Ascending aorta (tissue), 2 donors: ENCODE measurements at regions of chr17 and their contacts with region 1.

Region 1: DNA sequence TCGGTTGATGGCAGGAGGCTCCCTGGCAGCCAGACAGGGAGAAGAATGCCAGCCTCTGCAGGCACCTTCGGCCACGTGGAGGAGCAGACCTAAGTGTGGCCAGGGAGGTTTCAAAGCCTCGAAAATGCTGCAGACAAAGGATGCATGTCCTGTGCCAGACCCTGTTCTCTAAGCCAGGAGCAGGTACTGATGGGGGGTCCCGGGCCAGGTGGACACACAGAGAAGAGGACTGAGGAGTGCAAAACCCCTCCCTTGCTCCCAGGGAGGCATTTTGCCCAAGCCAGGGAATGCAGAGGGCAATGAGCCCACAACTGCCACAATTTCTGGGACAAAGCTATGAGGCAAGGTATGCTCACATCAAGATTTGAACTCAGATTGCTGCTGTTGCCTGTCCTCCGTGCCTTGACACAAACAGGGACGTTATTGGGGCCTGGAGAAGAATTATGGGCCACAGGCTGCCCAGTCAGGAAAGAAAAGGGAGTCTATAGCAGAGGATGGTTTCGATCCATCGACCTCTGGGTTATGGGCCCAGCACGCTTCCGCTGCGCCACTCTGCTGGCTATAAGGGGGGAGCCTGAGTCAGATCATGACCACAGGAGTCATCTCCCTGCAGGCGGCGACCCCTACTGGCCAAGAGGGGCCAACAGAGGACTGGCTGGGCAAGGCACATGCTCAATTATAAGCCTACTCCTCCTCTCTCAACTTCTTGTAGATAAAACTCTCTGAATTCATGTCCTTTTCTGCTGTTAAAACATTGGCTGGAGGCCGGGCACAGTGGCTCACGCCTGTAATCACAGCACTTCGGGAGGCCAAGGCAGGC is 25.1 kb upstream of the FOXK2 start:
- DNase-seq: peak; percentile 84 to 96
- H3K4me3 ChIP-seq: no peak overlapping the region
- H3K27ac ChIP-seq: peak overlapping the region; percentile 90 to 91
- H3K4me1 ChIP-seq: peaks cover 6 to 28% of the 10 kb centered on the region in 2 donors
- H3K27me3 ChIP-seq: no peaks in the 10 kb centered on the region
- CTCF ChIP-seq: peak; percentile 81 to 95 (median 87)

Region 2: DNA sequence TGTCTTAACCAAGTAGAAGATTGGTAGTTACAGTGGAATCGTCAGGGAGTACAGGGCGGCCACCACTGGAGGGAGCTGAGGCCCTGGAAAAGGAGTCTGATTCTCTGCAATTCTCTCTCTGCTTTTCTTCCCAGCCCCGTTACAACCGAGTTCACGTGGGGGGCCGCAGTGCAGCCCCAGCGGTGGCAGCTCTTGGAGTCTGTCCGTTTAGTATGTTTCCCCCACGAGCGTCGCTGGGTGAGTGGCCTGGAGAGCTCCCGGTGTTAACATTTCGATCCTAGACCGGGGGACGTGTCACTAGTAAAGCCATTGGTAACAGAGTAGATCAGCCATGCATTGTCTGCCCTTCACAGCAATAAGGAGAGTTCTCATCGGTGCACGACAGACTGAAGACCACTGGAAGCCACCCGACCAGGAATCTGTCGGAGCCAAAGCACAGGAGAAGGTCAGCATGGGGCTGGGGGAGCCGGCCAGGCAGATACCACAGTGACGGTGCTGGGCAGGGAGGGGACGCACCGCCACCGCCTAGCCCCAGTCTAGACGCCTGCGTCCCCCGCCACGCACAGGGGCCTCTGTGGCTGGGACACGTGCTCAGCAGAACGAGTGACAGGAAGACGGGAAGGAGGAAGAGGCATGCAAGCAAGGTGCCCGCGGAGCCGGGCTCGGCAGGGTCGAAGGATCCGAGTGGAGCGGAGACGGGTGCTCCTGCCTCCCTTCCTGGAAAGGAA is 249.9 kb before region 1 on chr17:
- intact Hi-C with region 1: no loop called
- DNase-seq: no peak
- H3K4me3 ChIP-seq: no peak overlapping the region
- H3K27ac ChIP-seq: no peak overlapping the region
- H3K4me1 ChIP-seq: peaks cover 33 to 47% of the 10 kb centered on the region in 2 donors
- H3K27me3 ChIP-seq: no peaks in the 10 kb centered on the region
- CTCF ChIP-seq: peak in 2 of 3 experiments; percentile 31 to 44

Region 3: DNA sequence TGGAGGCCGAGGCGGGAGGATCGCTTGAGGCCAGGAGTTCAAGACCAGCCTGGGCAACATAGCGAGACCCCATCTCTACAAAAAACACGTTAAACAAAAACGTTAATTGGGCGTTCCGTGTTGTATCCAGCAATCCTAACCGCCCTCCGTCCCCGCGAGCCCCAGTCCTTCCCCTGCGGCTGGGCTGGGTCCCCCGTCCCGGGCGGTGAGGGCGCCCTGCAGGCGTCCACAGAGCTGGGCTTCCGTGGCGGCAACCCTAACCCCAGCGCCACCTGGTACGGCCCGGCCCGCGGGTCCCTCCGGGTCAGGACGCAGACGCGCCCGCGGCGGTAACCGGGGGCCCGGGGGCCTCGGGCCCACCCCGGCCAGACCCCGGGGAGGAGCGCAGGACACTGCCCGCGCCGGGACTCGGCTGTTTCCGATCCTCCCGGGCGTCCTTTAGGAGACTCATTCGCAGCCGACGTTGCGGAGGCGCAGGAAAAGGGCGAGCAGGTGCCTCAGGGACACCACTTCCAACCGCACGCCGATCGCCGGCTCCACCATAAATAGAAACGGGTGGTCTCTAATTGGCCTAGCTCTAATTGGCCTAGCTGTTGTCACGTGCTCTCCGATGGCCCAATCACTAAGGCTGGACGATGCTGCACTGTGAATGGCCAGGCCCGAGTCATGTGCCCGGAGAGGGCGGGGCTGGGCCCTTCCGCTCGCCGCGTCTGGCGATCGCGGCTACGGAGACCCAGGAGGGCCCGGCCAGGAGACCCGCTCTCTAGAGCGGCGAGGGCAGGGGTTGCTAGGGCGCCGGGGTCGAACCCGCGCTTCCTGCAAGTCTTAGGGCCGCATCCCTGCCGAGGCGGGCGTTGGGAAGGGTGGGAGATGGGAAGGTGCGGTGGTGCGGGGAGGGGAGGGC is 201.9 kb before region 1 on chr17:
- intact Hi-C with region 1: loop called (anchors 5 kb)
- DNase-seq: peak; percentile 95 to 98
- H3K4me3 ChIP-seq: peak overlapping the region; percentile 91 to 97
- H3K27ac ChIP-seq: peak overlapping the region; percentile 98 to 99
- H3K4me1 ChIP-seq: peaks cover 4 to 22% of the 10 kb centered on the region in 2 donors
- H3K27me3 ChIP-seq: no peaks in the 10 kb centered on the region
- CTCF ChIP-seq: no peak

Region 4: DNA sequence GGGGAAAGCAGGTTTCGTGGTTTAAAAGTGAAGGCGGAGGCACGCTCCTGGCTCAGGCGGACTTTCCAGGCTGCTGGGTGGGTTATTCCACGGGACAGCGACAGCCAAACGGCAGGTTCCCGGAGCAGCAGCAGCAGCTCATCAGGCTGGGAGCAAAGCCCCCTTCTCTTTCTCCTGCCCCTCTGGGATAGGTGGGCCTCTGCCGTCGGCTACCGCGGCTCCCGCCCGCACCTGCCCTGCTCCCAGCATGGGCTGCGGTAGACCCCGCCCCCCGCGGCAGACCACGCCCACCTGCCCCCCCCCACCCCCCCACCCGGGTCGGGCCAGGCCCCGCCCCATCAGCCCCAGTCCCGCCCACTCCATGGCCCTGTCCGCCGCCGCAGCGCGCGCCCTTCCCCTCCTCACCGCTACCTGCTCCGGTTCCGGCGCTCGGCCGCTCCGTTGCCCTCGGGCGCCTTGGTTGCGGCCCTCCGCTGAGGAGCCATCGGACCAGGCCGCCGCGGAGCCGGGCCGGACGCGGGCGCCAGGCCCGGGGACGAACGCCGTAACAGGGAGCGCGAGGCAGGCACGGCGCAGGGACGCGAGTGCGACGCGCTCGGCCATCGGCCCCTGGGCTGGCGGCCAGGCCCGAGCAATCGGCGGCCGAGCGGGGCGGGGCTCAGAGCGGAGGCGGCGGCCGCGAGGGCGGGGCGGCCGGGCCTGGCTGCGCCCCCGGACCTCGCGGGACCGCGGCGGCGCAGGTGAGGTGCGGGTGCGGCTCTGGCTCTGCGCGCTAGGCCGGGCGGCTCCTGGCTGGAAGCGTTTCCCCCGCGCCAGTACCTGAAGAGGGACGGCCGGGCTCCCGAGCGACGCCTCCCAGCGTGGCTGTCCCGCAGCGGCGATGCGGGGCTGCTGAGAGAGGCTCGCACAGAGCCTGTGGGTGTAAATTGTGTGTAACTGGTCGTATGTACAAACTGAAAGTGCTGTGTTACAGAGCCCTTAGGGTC is 76.2 kb before region 1 on chr17 and contains the starts of genes HEXD and OGFOD3:
- intact Hi-C with region 1: loop called (anchors 2 kb)
- DNase-seq: peak in 1 of 2 donors; percentile 89
- H3K4me3 ChIP-seq: peak within 1 kb of the TSS; percentile 79 to 96
- H3K27ac ChIP-seq: peak within 1 kb of the TSS; percentile 75 to 92
- H3K4me1 ChIP-seq: peaks cover 4 to 10% of the 10 kb centered on the region in 2 donors
- H3K27me3 ChIP-seq: no peaks in the 10 kb centered on the region
- CTCF ChIP-seq: peak in 1 of 3 experiments; percentile 32
- total RNA-seq, gene HEXD: 40.4 TPM
- total RNA-seq, gene OGFOD3: 36.6 TPM

Region 5: DNA sequence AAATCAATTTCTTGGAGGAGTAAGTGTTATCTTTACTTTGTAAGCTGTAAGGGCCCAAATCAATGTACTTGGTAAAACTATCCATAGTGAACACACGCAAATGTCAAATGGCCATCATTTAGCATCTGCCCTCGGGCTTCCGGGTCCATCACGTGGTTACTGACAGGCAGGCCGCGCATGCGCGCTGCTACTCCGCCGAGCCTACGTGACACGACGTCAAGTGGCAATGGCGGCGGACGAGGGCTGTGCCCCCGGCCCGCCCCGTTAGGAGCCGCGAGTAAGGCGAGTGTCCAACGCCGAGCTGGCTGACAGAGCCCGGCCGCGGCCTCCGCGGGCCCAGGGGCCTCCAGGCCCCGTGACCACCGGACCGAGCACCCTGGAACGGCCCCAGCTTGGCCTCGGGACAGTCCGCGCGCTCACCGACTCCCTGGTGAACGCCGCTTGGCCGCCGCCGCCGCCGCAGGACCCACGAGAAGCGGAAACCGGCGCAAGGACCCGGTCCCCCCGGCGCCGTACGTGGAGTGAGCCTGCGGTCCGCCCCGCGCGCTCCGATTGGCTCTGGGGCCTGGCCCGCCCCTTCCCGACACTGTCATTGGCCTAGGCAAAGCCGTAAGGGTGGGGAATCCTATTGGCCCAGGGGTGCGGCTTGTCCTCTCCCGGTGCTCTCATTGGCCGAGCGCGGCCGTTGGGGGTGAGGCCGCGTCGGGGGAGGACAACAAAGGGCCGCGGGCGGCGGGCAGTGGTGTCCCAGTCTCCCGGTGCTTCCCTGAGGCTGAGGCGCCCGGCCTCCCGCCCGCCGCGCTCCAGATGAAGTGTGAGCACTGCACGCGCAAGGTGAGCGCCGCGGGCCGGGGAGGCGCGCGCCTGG is 36.2 kb before region 1 on chr17 and contains the start of gene NARF:
- intact Hi-C with region 1: loop called (anchors 1 kb)
- DNase-seq: peak; percentile 92 to 99
- H3K4me3 ChIP-seq: peak within 1 kb of the TSS; percentile 77 to 86
- H3K27ac ChIP-seq: peak within 1 kb of the TSS; percentile 100
- H3K4me1 ChIP-seq: peaks cover 0 to 12% of the 10 kb centered on the region in 2 donors
- H3K27me3 ChIP-seq: no peaks in the 10 kb centered on the region
- CTCF ChIP-seq: no peak
- total RNA-seq, gene NARF: 38.3 TPM

Region 6: GRCh38 chr17:82548681-82549303 is 54.3 kb after region 1 on chr17:
- intact Hi-C with region 1: no loop called
- DNase-seq: no peak
- H3K4me3 ChIP-seq: no peak overlapping the region
- H3K27ac ChIP-seq: no peak overlapping the region
- H3K4me1 ChIP-seq: peaks cover 6 to 49% of the 10 kb centered on the region in 2 donors
- H3K27me3 ChIP-seq: no peaks in the 10 kb centered on the region
- CTCF ChIP-seq: no peak

Region 7: DNA sequence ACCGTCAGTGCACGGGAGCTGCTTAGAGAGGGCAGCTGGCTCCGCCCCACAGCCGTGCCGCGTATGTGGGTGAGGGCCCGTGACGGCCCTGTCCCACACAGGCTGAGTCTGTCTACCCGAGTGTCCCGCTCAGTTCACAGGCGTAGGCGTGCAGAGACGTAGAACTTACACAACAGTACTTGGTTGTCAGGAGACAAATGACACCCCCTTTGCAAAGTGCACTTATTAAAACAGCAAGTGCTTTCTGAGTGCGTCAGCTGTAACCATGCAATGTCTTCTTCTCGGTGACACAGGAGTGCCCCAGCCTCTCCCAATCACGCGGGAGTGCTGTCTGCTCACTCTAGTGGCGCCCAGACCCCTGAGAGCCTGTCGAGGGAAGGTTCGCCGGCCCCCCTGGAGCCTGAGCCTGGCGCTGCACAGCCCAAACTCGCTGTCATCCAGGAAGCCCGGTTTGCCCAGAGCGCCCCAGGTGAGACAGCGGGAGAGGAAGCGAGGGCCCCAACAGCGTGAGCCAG is 89.3 kb after region 1 on chr17:
- intact Hi-C with region 1: no loop called
- DNase-seq: no peak
- H3K4me3 ChIP-seq: no peak overlapping the region
- H3K27ac ChIP-seq: no peak overlapping the region
- H3K4me1 ChIP-seq: no peaks in the 10 kb centered on the region
- H3K27me3 ChIP-seq: no peaks in the 10 kb centered on the region
- CTCF ChIP-seq: no peak